Transverse colon (tissue), 4 donors: ENCODE measurements at regions of chr6 and their contacts with region 1.

Region 1: GRCh38 chr6:11496152-11497060 is 41.1 kb upstream of the TMEM170B start:
- DNase-seq: peak; percentile 74
- H3K4me3 ChIP-seq: no peak overlapping the region
- H3K27ac ChIP-seq: no peak overlapping the region
- H3K4me1 ChIP-seq: peaks cover 0 to 11% (median 7%) of the 10 kb centered on the region in 4 donors
- H3K27me3 ChIP-seq: no peaks in the 10 kb centered on the region
- CTCF ChIP-seq: peak; percentile 83 to 98 (median 86)
- EP300 ChIP-seq: no peak
- POLR2A ChIP-seq: no peak

Region 2: GRCh38 chr6:11126876-11127275 is 369.5 kb before region 1 on chr6:
- in situ Hi-C with region 1: no loop called
- intact Hi-C with region 1: loop called (anchors 5 kb)
- DNase-seq: no peak
- H3K4me3 ChIP-seq: no peak overlapping the region
- H3K27ac ChIP-seq: no peak overlapping the region
- H3K4me1 ChIP-seq: no peaks in the 10 kb centered on the region
- H3K27me3 ChIP-seq: no peaks in the 10 kb centered on the region
- CTCF ChIP-seq: no peak
- EP300 ChIP-seq: no peak
- POLR2A ChIP-seq: no peak

Region 3: DNA sequence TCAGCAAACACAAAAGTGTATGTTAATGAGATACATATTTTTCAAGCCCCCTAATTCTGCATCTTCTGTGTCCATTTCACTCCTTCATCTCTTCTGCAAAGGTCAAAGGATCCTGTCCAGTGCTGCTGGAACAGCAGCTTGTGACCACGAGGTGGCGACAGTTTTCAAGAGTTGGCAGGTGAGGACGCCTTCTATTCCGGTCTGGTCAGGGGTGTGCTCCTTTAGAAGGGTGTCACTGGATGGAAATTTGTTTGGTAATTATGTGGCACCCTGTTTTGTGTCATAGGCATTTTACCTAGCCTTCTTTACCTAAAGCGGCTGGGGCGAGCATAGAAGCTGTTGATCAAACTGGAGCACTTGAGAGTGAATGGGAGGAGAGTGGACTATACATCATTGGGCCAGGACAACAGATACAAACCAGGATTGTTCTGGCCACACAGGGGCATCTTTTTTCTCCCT is 352.0 kb before region 1 on chr6:
- in situ Hi-C with region 1: loop called (anchors 5 to 10 kb)
- intact Hi-C with region 1: loop called (anchors 5 kb)
- DNase-seq: peak; percentile 81
- H3K4me3 ChIP-seq: no peak overlapping the region
- H3K27ac ChIP-seq: no peak overlapping the region
- H3K4me1 ChIP-seq: peaks cover 0 to 6% (median 0%) of the 10 kb centered on the region in 4 donors
- H3K27me3 ChIP-seq: no peaks in the 10 kb centered on the region
- CTCF ChIP-seq: peak; percentile 86 to 94 (median 92)
- EP300 ChIP-seq: no peak
- POLR2A ChIP-seq: no peak